Endothelial cell of umbilical vein (primary cell): ENCODE measurements at regions of chr20 and their contacts with region 1.

Region 1: GRCh38 chr20:58890518-58891085 is 38.1 kb downstream of the GNAS start:
- DNase-seq: peak; percentile 87
- H3K4me3 ChIP-seq: peak overlapping the region; percentile 17 to 91 (median 70)
- H3K27ac ChIP-seq: peak overlapping the region; percentile 47
- H3K4me1 ChIP-seq: peaks cover 30% of the 10 kb centered on the region
- H3K27me3 ChIP-seq: peaks cover 2% of the 10 kb centered on the region in 2 experiments
- CTCF ChIP-seq: no peak
- POLR2A ChIP-seq: peak; percentile 25

Region 2: DNA sequence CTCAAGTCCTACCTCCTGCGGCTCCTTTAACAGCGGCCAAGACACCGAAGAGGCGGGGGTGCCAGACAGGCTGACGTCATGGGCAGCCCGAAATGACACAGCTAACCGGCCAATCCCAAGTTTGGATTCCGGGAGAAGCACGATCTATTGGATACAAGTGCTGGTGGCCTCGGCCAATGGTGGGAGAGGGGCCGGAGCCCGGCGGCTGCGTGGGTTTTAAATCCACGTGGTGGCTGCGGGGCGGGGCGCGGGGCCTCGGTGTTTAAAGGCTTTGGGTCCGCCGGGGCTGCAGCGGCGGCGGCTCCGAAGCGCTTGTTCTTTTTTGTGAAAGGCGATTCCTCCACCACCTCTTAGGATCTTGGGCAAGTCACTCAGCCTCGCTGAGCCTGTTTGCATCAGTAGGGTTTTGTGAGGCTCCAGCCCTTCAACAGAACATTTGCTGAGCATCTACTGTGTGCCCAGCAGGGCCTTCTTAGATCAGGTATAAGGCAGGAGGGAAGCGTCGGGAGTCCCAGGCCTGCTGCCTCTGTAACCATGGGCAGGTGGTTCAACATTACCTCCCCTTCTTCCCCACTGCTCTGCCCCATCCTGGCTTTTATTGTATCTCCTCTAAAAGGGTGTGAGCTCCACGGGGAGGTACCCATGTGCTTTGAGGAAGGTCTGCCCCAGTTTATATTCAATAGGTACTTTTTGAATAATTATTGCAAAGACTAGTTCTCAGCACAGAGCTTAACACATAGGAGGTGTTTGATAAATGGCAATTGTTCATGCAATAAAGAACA is 1171.9 kb before region 1 on chr20:
- CTCF ChIA-PET with region 1: no interaction called
- POLR2A ChIA-PET with region 1: no interaction called
- dilution Hi-C with region 1: no loop called
- intact Hi-C with region 1: loop called (anchors 10 kb)
- DNase-seq: peak; percentile 97
- H3K4me3 ChIP-seq: peak overlapping the region in 1 of 3 experiments; percentile 11
- H3K27ac ChIP-seq: no peak overlapping the region
- H3K4me1 ChIP-seq: peaks cover 4% of the 10 kb centered on the region
- H3K27me3 ChIP-seq: peaks cover 2 to 11% of the 10 kb centered on the region in 2 experiments
- CTCF ChIP-seq: no peak
- POLR2A ChIP-seq: no peak

Region 3: DNA sequence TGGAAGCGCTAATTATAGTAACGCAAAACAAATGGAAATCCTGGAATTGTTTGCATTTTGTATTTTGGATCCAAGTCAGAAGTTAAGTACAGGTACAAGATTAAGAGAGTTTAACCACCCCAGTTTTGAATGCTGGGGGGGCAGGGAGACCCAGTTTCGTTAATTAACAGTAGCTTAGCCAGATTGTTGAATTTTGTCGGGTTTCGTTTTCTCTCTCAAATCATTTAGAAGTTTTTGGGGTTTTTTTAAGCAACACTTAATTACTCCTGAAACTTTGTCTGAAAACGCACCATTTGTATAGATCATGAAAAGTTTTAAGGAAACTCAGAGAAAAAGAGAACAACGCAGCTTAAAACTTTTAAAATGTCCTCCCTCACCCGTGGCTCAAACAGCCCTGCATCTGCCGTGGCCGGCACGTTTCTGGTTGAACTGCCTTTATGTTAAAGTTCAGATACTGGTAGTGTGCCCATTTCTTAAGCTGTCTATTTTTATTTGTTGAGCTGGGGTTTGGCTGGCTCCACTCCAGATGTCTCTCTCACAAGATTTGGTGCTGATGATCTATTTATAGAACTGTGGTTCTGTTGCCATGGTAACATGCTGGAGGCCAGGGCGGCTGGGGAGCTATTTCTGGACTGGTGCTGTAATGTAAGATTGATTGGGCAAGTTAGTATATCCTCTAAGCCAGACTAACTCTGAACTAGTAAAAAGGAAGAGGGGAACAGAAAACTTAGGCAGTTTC is 17.0 kb after region 1 on chr20:
- CTCF ChIA-PET with region 1: no interaction called
- POLR2A ChIA-PET with region 1: interaction called, 6 read pairs
- dilution Hi-C with region 1: no loop called
- intact Hi-C with region 1: loop called (anchors 1 kb)
- DNase-seq: peak; percentile 97
- H3K4me3 ChIP-seq: peak overlapping the region in 1 of 3 experiments; percentile 39
- H3K27ac ChIP-seq: peak overlapping the region; percentile 97
- H3K4me1 ChIP-seq: peaks cover 34% of the 10 kb centered on the region
- H3K27me3 ChIP-seq: no peaks in the 10 kb centered on the region
- CTCF ChIP-seq: no peak
- POLR2A ChIP-seq: no peak